Activated CD4-positive, alpha-beta memory T cell treated with anti-CD3 and anti-CD28 coated beads, Interleukin-2, amount 10 ng/mL, durations not matched to agents 7 days and 5 days (primary cell): ENCODE measurements at regions of chr5 and their contacts with region 1.

Region 1: DNA sequence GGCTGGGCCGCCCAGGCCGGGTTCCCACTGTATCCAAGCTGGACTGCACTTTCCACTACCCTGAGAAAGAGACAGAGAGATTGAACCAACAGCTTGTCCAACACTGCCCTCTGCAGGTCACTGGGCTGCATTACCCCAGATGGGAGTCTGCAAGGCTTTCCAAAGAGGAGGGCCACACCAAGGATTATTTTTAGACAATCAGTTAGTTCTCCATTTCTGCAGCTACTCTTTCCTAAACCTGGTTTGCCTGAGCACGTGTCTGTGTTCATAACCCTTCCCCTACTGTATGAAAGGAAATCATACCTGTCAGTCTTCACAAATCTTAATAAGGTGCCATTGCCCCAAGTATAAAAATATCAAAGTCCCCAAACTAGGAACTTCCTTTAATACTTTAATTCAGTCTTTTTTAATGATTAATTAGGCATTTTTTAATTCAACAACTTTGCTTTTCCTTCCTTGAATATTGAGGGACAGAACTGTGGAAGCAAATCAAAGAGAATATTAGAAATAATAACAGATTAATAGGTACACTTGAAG is 13.4 kb upstream of the FGF1 start:
- DNase-seq: peak; percentile 80
- H3K4me3 Mint-ChIP-seq: no peak overlapping the region
- H3K27ac Mint-ChIP-seq: no peak overlapping the region
- H3K4me1 Mint-ChIP-seq: no peaks in the 10 kb centered on the region
- H3K27me3 Mint-ChIP-seq: peaks cover 7% of the 10 kb centered on the region

Region 2: GRCh38 chr5:142611154-142611553 is 88.1 kb before region 1 on chr5:
- CTCF ChIA-PET with region 1: interaction called, 26 read pairs
- POLR2A ChIA-PET with region 1: no interaction called
- DNase-seq: peak; percentile 74
- H3K4me3 Mint-ChIP-seq: no peak overlapping the region
- H3K27ac Mint-ChIP-seq: no peak overlapping the region
- H3K4me1 Mint-ChIP-seq: no peaks in the 10 kb centered on the region
- H3K27me3 Mint-ChIP-seq: peaks cover 24% of the 10 kb centered on the region

Region 3: DNA sequence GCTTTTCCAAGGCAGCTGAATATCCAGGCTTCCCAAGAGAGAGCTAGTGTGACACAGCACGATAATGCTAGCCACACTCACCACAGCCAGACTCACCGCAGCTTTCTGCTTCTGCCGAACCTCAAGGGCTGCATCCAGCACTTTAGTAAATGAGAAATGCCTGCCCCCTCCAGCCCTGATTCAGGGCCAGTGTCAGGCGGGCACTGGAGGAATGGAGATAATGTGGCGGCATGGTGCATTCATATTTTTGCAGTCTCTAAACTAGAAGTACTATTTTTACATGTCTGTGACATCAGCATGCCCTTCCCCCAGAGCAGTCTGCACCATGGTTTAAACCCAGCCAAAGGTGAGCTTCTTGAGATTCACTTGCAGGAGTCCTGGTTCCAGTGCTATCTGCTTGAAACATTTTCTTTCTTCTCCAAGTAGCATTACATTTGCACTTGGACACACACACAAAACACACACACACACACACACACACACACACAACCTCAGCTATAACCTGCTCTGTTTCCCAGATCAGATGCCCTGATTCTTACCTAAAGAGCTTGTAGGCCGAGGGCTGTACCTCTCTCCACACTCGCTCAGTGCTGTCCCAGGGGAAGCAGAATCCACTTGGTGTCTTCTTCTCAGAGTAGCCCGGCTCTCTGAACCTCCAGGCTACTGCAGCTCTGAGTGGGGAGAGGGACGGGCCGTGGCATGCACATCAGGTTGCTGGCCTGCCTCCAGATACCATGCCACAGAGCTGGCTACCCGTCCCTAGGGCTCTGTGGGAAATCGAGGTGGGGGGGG is 13.6 kb before region 1 on chr5 and contains the start of gene FGF1:
- CTCF ChIA-PET with region 1: interaction called, 15 read pairs
- POLR2A ChIA-PET with region 1: no interaction called
- DNase-seq: no peak
- H3K4me3 Mint-ChIP-seq: no peak within 1 kb of the TSS
- H3K27ac Mint-ChIP-seq: no peak within 1 kb of the TSS
- H3K4me1 Mint-ChIP-seq: no peaks in the 10 kb centered on the region
- H3K27me3 Mint-ChIP-seq: peaks cover 3% of the 10 kb centered on the region
- total RNA-seq, gene FGF1: not detected